Lower lobe of right lung (tissue), 2 donors: ENCODE measurements at regions of chr6 and their contacts with region 1.

Region 1: DNA sequence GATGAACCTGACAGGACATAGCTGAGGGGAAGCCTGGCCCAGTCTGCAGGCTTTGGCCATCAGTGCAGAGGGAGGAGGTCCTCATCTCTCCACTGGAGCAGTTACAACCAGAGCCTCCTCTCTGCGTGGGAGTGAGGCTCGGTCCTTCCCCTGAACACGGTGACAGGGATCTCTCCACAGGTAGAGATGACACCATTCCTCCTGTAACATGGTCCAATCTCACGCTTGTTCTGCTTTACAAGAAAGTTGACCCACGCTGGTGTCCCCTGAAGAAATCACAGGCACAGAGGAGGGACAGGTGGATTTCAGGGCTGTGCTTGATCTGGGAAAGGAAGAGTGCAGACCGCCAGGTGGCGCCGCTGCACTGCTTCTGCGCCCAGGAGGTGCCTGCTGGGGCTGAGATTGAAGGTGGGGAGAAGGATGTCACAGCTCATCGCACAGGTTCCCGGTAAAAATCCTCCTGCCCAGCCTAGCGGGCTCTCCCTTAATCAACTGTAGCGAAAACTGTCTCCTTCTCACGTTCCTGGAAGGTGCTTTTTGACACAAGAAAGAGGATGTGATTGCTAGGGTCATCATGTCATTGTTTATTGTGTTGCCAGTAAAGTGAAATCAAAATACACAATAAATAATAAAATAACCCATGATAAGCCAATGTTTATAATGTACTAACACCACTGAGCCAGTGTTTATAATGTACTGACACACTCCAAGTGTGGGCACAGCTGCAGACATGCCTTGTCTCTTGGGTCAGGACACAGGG is 20.4 kb downstream of the HLA-G start:
- DNase-seq: peak; percentile 87
- ATAC-seq: peak; percentile 92 to 93
- H3K4me3 ChIP-seq: no peak overlapping the region
- H3K27ac ChIP-seq: no peak overlapping the region
- H3K4me1 ChIP-seq: peaks cover 7% of the 10 kb centered on the region
- H3K27me3 ChIP-seq: peaks cover 32% of the 10 kb centered on the region
- CTCF ChIP-seq: peak; percentile 95

Region 2: GRCh38 chr6:30013291-30013922 is 165.4 kb after region 1 on chr6:
- intact Hi-C with region 1: loop called (anchors 2 kb)
- DNase-seq: no peak
- ATAC-seq: peak; percentile 75 to 77
- H3K4me3 ChIP-seq: no peak overlapping the region
- H3K27ac ChIP-seq: no peak overlapping the region
- H3K4me1 ChIP-seq: no peaks in the 10 kb centered on the region
- H3K27me3 ChIP-seq: no peaks in the 10 kb centered on the region
- CTCF ChIP-seq: peak; percentile 93